ENCODE measurements at regions of chr1 and their contacts with region 1.

Region 1: GRCh38 chr1:54810100-54810942 is 9.2 kb upstream of the TTC22 start:
- H3K4me3 ChIP-seq: no peak overlapping the region
- H3K27ac ChIP-seq: no peak overlapping the region
- H3K4me1 ChIP-seq: no peaks in the 10 kb centered on the region
- CTCF ChIP-seq: peak; percentile 94

Region 2: GRCh38 chr1:54671985-54672608 is 138.2 kb before region 1 on chr1:
- CTCF ChIA-PET with region 1: interaction called, 12 read pairs
- POLR2A ChIA-PET with region 1: no interaction called
- H3K4me3 ChIP-seq: no peak overlapping the region
- H3K27ac ChIP-seq: no peak overlapping the region
- H3K4me1 ChIP-seq: no peaks in the 10 kb centered on the region
- CTCF ChIP-seq: peak; percentile 91

Measured in HEK293 (cell line).